ENCODE measurements at regions of chr10 and their contacts with region 1.

Region 1: DNA sequence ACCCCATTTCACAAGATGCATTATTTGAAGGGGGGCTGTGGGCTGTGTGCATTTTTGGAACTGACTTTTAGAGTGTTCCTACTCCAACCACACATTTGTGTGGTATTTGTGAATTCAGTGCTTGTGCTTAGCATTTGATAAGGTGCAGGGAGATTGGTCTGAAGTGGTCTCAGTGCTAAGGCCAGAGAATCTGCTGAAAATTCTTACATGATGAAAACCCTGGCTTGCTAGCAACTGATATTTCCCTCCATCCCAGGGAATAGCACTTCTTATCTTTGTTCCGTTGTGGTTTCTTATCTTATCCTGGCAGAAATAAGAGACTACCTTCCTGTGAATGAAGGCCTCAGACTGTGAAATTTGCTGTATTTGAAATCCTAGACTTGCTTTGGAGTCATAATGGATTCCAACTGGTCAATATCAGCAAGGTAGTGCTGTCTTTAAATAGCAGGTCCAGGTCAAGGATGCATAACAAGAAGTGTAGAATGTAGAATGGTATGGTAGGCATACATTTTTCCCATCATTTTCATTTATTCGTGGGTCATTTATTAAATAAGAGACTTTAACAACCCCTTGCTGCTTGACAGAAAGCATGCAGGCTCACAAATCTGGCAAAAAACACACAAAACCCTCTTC is 986.9 kb downstream of the REEP3 start:
- DNase-seq: peak; percentile 30 to 90 (median 55)
- ATAC-seq: peak; percentile 87
- H3K4me3 ChIP-seq: no peak overlapping the region
- H3K27ac ChIP-seq: peak overlapping the region; percentile 53; the same call in 2 of the 3 replicates
- H3K4me1 ChIP-seq: peaks cover 7 to 32% of the 10 kb centered on the region in 2 experiments; a peak in 4 of 5 replicates
- H3K27me3 ChIP-seq: no peaks in the 10 kb centered on the region
- CTCF ChIP-seq: no peak
- EP300 ChIP-seq: peak; percentile 99
- POLR2A ChIP-seq: no peak
- RAD21 ChIP-seq: peak; percentile 14 to 37; a peak in 2 of 4 replicates

Region 2: DNA sequence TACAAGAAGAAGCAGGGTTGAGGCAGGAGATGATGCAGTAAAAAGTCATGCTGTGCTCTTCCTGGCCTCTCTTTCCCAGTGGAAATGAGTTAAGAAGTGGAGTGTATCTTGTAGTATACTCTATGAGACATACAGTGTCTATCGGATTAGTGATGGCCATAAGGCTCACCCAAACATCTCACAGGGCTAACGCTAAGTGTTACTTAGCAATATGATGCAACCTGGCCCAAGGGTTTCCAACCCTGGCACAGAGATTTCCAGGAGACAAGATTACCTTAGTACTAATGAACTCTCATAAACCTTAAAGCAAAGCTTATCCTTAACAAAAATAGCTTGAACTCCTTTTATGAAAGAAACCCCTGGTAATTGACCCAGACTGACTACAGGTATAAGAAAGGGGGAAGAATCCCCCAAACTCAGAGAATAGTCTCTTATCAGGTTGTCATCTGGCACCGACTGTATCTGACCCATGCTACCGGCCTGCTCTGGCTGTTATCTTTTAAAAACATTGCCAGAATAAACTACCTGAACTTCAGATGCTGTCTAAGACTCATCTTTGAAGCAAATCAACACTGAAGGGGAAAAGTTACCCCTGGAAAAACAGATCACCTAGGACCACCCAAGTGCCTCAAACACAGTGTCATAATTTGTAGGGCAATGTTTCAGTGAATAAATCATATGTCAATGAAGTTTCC is 15.1 kb after region 1 on chr10:
- CTCF ChIA-PET with region 1: no interaction called
- POLR2A ChIA-PET with region 1: interaction called, 3 read pairs
- in situ Hi-C with region 1: no loop called
- intact Hi-C with region 1: loop called (anchors 2 kb)
- DNase-seq: no peak
- ATAC-seq: peak; percentile 64
- H3K4me3 ChIP-seq: no peak overlapping the region
- H3K27ac ChIP-seq: no peak overlapping the region
- H3K4me1 ChIP-seq: peaks cover 0 to 48% of the 10 kb centered on the region in 2 experiments; a peak in 3 of 5 replicates
- H3K27me3 ChIP-seq: no peaks in the 10 kb centered on the region
- CTCF ChIP-seq: no peak
- EP300 ChIP-seq: peak; percentile 27
- POLR2A ChIP-seq: no peak
- RAD21 ChIP-seq: no peak

Region 3: GRCh38 chr10:64576497-64576896 is 68.4 kb after region 1 on chr10:
- CTCF ChIA-PET with region 1: no interaction called
- POLR2A ChIA-PET with region 1: no interaction called
- in situ Hi-C with region 1: no loop called
- intact Hi-C with region 1: loop called (anchors 5 kb)
- DNase-seq: no peak
- ATAC-seq: no peak; the same call in 2 of the 3 replicates
- H3K4me3 ChIP-seq: no peak overlapping the region
- H3K27ac ChIP-seq: no peak overlapping the region
- H3K4me1 ChIP-seq: peaks cover 0 to 5% of the 10 kb centered on the region in 2 experiments; a peak in 3 of 5 replicates
- H3K27me3 ChIP-seq: no peaks in the 10 kb centered on the region
- CTCF ChIP-seq: no peak
- EP300 ChIP-seq: no peak
- POLR2A ChIP-seq: no peak
- RAD21 ChIP-seq: no peak

Region 4: GRCh38 chr10:64648915-64649314 is 140.8 kb after region 1 on chr10:
- CTCF ChIA-PET with region 1: no interaction called
- POLR2A ChIA-PET with region 1: no interaction called
- in situ Hi-C with region 1: no loop called
- intact Hi-C with region 1: loop called (anchors 10 kb)
- DNase-seq: peak in 2 of 4 experiments; percentile 8 to 40
- ATAC-seq: peak; percentile 85
- H3K4me3 ChIP-seq: no peak overlapping the region
- H3K27ac ChIP-seq: no peak overlapping the region
- H3K4me1 ChIP-seq: no peaks in the 10 kb centered on the region
- H3K27me3 ChIP-seq: no peaks in the 10 kb centered on the region
- CTCF ChIP-seq: peak; percentile 22 to 42 (median 30); a peak in 3 of 6 replicates
- EP300 ChIP-seq: no peak
- POLR2A ChIP-seq: no peak
- RAD21 ChIP-seq: no peak

Measured in K562 (cell line).